Panc1 (cell line): ENCODE measurements at regions of chr3 and their contacts with region 1.

Region 1: GRCh38 chr3:2978977-2979732 is 131.0 kb downstream of the IL5RA start:
- DNase-seq: no peak
- ATAC-seq: no peak
- H3K4me3 ChIP-seq: no peak overlapping the region
- H3K27ac ChIP-seq: no peak overlapping the region
- H3K4me1 ChIP-seq: no peaks in the 10 kb centered on the region
- H3K27me3 ChIP-seq: no peaks in the 10 kb centered on the region
- CTCF ChIP-seq: no peak

Region 2: GRCh38 chr3:3065876-3066275 is 86.7 kb after region 1 on chr3:
- CTCF ChIA-PET with region 1: no interaction called
- POLR2A ChIA-PET with region 1: interaction called, 12 read pairs
- in situ Hi-C with region 1: no loop called
- intact Hi-C with region 1: no loop called
- DNase-seq: no peak
- ATAC-seq: no peak
- H3K4me3 ChIP-seq: no peak overlapping the region
- H3K27ac ChIP-seq: no peak overlapping the region
- H3K4me1 ChIP-seq: no peaks in the 10 kb centered on the region
- H3K27me3 ChIP-seq: no peaks in the 10 kb centered on the region
- CTCF ChIP-seq: no peak